ENCODE measurements at regions of chr9 and their contacts with region 1.

Region 1: GRCh38 chr9:18255158-18255629 is 218.8 kb upstream of the ADAMTSL1 start:
- DNase-seq: peak; percentile 16 to 81
- H3K4me3 ChIP-seq: no peak overlapping the region
- H3K27ac ChIP-seq: no peak overlapping the region
- H3K4me1 ChIP-seq: peaks cover 0 to 2% of the 10 kb centered on the region in 2 donors
- H3K27me3 ChIP-seq: no peaks in the 10 kb centered on the region
- CTCF ChIP-seq: peak; percentile 67 to 95 (median 95)

Region 2: DNA sequence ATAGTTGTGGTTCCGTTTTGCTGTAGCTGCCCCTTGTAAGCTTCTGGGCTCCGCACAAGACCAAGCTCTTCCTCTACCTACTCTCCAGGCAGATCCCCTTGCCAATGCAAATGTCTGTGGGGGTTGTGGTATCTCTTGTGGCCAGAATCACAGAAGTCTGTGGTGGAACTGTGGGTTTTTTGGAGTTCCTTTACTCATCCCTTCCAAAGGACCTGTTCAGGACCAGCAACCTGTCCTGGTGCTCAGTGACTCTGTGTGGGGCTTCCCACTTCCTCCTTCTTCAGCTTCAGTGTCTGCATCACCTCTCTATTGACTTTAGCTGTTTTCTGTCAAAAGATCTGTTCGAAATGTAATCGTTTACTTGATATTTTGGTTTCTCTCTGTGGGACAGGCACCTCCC is 222.6 kb before region 1 on chr9:
- intact Hi-C with region 1: no loop called
- DNase-seq: no peak
- H3K4me3 ChIP-seq: no peak overlapping the region
- H3K27ac ChIP-seq: no peak overlapping the region
- H3K4me1 ChIP-seq: peaks cover 0 to 28% of the 10 kb centered on the region in 2 donors
- H3K27me3 ChIP-seq: no peaks in the 10 kb centered on the region
- CTCF ChIP-seq: no peak

Region 3: DNA sequence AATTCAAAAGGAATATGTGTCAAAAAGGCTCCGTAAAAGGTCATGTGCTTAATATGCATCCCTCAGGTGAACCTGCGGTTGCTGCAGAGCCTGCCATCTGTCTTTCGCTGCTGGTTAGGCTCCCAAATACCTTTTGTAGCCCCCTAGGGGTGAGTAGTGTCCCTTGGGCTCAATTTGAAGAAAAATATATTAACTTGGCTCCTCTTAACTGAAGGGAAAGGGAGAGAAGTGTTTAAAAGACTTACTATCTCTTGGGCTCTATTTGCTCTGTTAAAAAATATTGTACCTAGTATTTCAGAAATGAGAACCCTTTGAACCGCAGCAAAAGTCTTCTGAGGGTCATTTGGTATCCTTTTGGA is 42.3 kb after region 1 on chr9:
- intact Hi-C with region 1: loop called (anchors 5 kb)
- DNase-seq: no peak
- H3K4me3 ChIP-seq: peak overlapping the region in 1 of 2 donors; percentile 51
- H3K27ac ChIP-seq: peak overlapping the region; percentile 35 to 45
- H3K4me1 ChIP-seq: peaks cover 0 to 10% of the 10 kb centered on the region in 2 donors
- H3K27me3 ChIP-seq: no peaks in the 10 kb centered on the region
- CTCF ChIP-seq: no peak

Region 4: DNA sequence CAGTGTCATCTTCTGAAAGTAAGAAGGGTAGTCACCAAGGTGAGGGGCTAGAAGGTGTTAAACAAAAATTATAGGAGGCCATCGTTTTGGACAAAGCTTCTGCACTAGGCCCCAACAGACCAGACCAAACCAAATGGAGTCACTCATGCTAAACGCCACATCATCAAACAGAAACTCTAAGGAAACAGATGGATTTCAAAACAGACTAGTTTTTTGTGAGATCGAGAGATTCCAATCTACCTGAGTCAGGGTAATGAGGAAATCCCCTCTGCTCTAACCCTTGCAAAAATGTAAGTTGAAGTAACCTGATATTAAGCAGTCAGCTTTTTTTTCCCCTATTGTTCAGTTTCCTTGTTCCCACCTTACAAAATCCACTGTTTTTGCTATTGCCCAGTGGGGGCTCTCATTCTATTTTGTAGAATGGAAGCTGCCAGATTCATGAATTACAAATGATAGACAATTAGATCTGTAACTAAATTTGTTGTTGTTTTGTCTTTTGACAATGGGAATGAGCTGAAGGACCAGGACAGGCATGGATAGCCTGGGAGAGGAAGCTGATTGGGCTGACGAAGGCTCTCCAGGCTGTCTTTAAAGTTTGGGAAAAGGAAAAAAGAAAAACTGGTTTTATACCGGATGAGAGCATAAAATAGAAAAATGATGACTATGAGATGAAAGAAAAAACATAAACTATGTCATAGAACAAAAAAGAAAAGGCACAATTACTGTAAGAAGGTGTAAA is 124.0 kb after region 1 on chr9:
- intact Hi-C with region 1: loop called (anchors 5 kb)
- DNase-seq: no peak
- H3K4me3 ChIP-seq: no peak overlapping the region
- H3K27ac ChIP-seq: no peak overlapping the region
- H3K4me1 ChIP-seq: peaks cover 0 to 11% of the 10 kb centered on the region in 2 donors
- H3K27me3 ChIP-seq: no peaks in the 10 kb centered on the region
- CTCF ChIP-seq: no peak

Region 5: DNA sequence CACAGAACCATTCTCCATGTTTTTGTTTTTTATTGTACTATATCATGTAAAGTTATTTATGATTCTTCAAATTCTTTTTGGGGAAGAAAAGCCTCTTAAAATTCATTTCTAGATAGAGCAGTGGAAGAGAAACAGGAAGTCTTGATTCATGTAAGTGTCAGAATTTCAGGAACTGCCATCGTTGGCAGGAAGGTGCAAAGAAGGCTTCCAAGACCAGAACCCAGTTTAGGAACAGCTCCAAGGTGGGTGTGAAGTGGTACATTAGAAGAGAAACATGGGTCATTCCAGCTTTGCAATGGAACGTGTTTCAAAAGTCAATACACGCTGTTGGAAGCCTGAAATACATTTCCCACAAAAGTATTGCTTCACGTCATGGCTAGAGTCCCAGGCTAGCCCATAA is 763.0 kb after region 1 on chr9:
- intact Hi-C with region 1: loop called (anchors 5 kb)
- DNase-seq: no peak
- H3K4me3 ChIP-seq: no peak overlapping the region
- H3K27ac ChIP-seq: no peak overlapping the region
- H3K4me1 ChIP-seq: no peaks in the 10 kb centered on the region
- H3K27me3 ChIP-seq: no peaks in the 10 kb centered on the region
- CTCF ChIP-seq: no peak

Region 6: GRCh38 chr9:19028835-19029451 is 773.7 kb after region 1 on chr9:
- intact Hi-C with region 1: loop called (anchors 1 kb)
- DNase-seq: no peak
- H3K4me3 ChIP-seq: no peak overlapping the region
- H3K27ac ChIP-seq: no peak overlapping the region
- H3K4me1 ChIP-seq: peaks cover 0 to 4% of the 10 kb centered on the region in 2 donors
- H3K27me3 ChIP-seq: no peaks in the 10 kb centered on the region
- CTCF ChIP-seq: peak; percentile 62 to 83 (median 64)